ENCODE measurements at regions of chr7 and their contacts with region 1.

Region 1: DNA sequence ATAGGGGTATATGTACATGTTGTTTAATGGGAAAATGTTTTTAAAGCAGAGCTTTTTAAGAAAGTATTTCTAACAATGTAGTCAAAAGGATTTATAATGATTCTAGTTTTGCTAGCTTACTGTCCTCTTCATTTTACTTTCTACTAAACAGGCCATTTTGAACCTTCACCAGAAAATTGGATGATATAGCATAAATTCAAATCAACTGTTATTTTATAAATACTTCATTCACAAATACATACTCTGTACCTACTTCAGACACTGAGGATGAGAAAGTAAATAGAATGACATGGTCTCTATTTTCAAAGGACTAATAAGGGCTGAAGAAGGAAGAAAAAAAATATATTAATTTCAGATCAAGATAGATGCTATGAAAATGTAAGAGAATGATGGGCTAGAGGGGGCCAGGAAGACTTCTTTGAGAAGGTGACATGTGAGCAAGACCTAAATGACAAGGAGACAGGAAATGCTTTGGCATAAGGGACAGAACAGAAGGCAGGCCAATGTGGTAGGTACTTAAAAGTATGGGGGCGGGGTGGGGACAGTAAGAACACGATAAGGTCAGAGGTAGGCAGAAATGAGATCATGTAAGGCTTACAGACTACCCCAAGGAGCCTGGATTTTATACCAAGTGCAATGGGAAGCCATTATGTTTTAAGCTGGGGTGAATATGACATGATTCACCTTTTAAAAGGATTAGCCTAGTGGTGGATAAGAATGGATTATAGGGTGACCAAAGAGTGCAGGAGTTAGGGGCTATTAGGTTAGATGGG is 5.2 kb downstream of the NAMPT start:
- DNase-seq: no peak
- ATAC-seq: peak; percentile 47
- H3K4me3 ChIP-seq: peak overlapping the region; percentile 16; the same call in 1 of the 2 replicates
- H3K27ac ChIP-seq: no peak overlapping the region
- H3K4me1 ChIP-seq: peaks cover 7% of the 10 kb centered on the region; the same call in 1 of the 2 replicates
- H3K27me3 ChIP-seq: no peaks in the 10 kb centered on the region
- CTCF ChIP-seq: no peak
- EP300 ChIP-seq: no peak
- POLR2A ChIP-seq: no peak
- RAD21 ChIP-seq: no peak

Region 2: DNA sequence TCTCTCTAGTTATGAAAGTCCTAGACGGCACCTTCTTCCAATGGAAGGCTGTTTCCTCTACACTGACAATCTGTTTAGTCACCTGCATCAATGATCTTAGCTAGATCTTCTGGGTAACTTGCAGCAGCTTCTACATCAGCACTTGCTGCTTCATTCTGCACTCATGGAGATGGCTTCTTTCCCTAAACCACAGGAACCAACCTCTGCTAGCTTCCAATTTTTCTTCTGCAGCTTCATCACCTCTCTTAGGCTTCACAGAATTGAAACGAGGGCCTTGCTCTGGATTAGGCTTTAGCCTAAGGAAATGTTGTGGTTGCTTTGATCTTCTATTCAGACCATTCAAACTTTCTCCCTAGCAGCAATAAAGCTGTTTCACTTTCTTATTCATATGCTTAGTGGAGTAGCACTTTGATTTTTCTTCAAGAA is 19.5 kb before region 1 on chr7:
- CTCF ChIA-PET with region 1: interaction called, 4 read pairs
- POLR2A ChIA-PET with region 1: interaction called, 8 read pairs
- RAD21 ChIA-PET with region 1: interaction called, 10 read pairs
- SMC1A ChIA-PET with region 1: interaction called, 19 read pairs
- in situ Hi-C with region 1: no loop called
- intact Hi-C with region 1: no loop called
- DNase-seq: no peak
- ATAC-seq: peak; percentile 28
- H3K4me3 ChIP-seq: no peak overlapping the region
- H3K27ac ChIP-seq: no peak overlapping the region
- H3K4me1 ChIP-seq: peaks cover 18% of the 10 kb centered on the region
- H3K27me3 ChIP-seq: no peaks in the 10 kb centered on the region
- CTCF ChIP-seq: no peak
- EP300 ChIP-seq: no peak
- POLR2A ChIP-seq: no peak
- RAD21 ChIP-seq: no peak

Region 3: DNA sequence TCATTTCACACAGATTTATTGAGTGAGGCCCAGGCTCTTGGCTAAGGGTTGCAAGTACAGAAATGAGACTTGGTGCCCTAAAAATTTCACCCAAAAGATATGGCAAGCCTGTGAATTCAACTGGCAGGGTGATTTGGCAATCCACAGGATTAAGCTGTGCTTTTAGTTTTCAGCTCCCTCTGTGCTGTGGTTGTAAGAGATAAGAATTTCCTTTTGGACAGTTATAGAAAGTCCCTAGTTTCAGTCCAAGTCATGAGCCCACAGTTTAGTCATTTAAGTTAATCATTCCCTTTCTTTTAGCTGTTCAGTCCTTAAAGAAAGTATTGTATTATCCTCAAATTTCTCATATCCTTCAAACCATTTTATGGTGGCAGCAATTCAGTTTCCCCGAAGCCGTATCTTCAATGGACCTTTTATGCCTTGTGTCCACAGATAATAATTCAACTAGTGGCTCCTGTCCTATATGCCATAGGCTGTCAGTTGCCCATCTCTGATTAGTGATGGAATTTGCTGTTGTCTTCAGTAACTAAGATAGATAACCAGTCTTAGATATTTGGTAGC is 78.6 kb after region 1 on chr7:
- CTCF ChIA-PET with region 1: no interaction called
- POLR2A ChIA-PET with region 1: interaction called, 11 read pairs
- RAD21 ChIA-PET with region 1: interaction called, 12 read pairs
- SMC1A ChIA-PET with region 1: interaction called, 23 read pairs
- in situ Hi-C with region 1: no loop called
- intact Hi-C with region 1: no loop called
- DNase-seq: no peak
- ATAC-seq: peak; percentile 95
- H3K4me3 ChIP-seq: no peak overlapping the region
- H3K27ac ChIP-seq: peak overlapping the region; percentile 31; the same call in 1 of the 2 replicates
- H3K4me1 ChIP-seq: no peaks in the 10 kb centered on the region; the same call in 1 of the 2 replicates
- H3K27me3 ChIP-seq: no peaks in the 10 kb centered on the region
- CTCF ChIP-seq: no peak
- EP300 ChIP-seq: peak in 1 of 2 experiments; percentile 67; a peak in 1 of 4 replicates
- POLR2A ChIP-seq: no peak
- RAD21 ChIP-seq: no peak

Region 4: GRCh38 chr7:106367018-106367420 is 87.4 kb after region 1 on chr7:
- CTCF ChIA-PET with region 1: interaction called, 11 read pairs
- POLR2A ChIA-PET with region 1: interaction called, 3 read pairs
- RAD21 ChIA-PET with region 1: interaction called, 4 read pairs
- SMC1A ChIA-PET with region 1: interaction called, 16 read pairs
- in situ Hi-C with region 1: no loop called
- intact Hi-C with region 1: no loop called
- DNase-seq: no peak
- ATAC-seq: peak; percentile 80
- H3K4me3 ChIP-seq: no peak overlapping the region
- H3K27ac ChIP-seq: no peak overlapping the region
- H3K4me1 ChIP-seq: no peaks in the 10 kb centered on the region
- H3K27me3 ChIP-seq: no peaks in the 10 kb centered on the region
- CTCF ChIP-seq: peak; percentile 35 to 48 (median 41); a peak in 5 of 6 replicates
- EP300 ChIP-seq: no peak
- POLR2A ChIP-seq: no peak
- RAD21 ChIP-seq: peak; percentile 75